ENCODE measurements at regions of chr15 and their contacts with region 1.

Region 1: GRCh38 chr15:84826369-84826823 is 9.2 kb downstream of the ALPK3 start:
- DNase-seq: peak in 1 of 2 experiments; percentile 70
- H3K4me3 ChIP-seq: no peak overlapping the region
- H3K27ac ChIP-seq: no peak overlapping the region
- H3K4me1 ChIP-seq: peaks cover 0 to 10% (median 2%) of the 10 kb centered on the region in 4 experiments; a peak in 2 of 7 replicates
- H3K27me3 ChIP-seq: no peaks in the 10 kb centered on the region
- CTCF ChIP-seq: peak; percentile 74 to 99 (median 90)
- EP300 ChIP-seq: no peak
- POLR2A ChIP-seq: no peak
- RAD21 ChIP-seq: peak; percentile 77 to 82

Region 2: DNA sequence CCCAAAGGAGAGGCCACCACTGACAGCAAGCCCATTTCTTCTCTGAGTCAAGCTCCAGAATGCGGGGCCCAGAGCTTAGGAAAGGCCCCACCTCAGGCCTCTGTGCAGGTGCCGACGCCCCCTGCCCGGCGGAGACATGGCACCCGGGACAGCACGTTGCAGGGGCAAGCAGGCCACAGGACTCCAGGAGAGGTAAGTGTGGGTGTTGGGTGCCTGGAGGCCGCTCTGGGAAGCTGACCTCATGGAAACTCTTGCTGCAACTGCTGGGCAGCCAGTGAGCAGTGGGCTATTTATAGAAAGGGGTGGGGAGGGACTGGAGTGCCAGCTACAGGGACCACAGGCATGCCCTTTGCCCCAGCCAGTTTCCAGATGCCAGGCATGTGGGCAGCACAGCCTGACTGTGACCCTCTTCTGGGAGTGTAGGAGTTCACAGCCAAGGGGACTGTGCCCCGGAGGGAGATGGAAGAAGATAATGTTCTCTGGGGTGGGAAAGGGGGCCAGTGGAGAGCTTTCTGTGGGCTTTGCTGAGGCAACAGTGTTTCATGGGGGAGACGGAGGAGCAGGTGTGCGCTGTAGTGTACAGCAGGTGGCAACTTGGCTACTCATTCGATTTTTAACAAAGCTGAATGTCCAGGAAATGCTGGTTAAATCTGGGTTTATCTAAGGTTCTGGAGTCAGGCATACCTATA is 14.5 kb after region 1 on chr15:
- CTCF ChIA-PET with region 1: interaction called, 89 read pairs
- POLR2A ChIA-PET with region 1: interaction called, 6 read pairs
- DNase-seq: no peak
- H3K4me3 ChIP-seq: no peak overlapping the region
- H3K27ac ChIP-seq: no peak overlapping the region
- H3K4me1 ChIP-seq: no peaks in the 10 kb centered on the region
- H3K27me3 ChIP-seq: no peaks in the 10 kb centered on the region
- CTCF ChIP-seq: no peak
- EP300 ChIP-seq: no peak
- POLR2A ChIP-seq: no peak
- RAD21 ChIP-seq: no peak

Region 3: GRCh38 chr15:84863565-84864443 is 37.4 kb after region 1 on chr15:
- CTCF ChIA-PET with region 1: interaction called, 11 read pairs
- POLR2A ChIA-PET with region 1: interaction called, 3 read pairs
- DNase-seq: no peak
- H3K4me3 ChIP-seq: no peak overlapping the region
- H3K27ac ChIP-seq: no peak overlapping the region
- H3K4me1 ChIP-seq: no peaks in the 10 kb centered on the region
- H3K27me3 ChIP-seq: no peaks in the 10 kb centered on the region
- CTCF ChIP-seq: peak in 2 of 3 experiments; percentile 21 to 25; a peak in 3 of 4 replicates
- EP300 ChIP-seq: no peak
- POLR2A ChIP-seq: no peak
- RAD21 ChIP-seq: peak; percentile 34 to 47; a peak in 3 of 4 replicates

Region 4: GRCh38 chr15:84871428-84872305 is 45.3 kb after region 1 on chr15:
- CTCF ChIA-PET with region 1: interaction called, 18 read pairs
- POLR2A ChIA-PET with region 1: interaction called, 5 read pairs
- DNase-seq: no peak
- H3K4me3 ChIP-seq: no peak overlapping the region
- H3K27ac ChIP-seq: no peak overlapping the region
- H3K4me1 ChIP-seq: no peaks in the 10 kb centered on the region
- H3K27me3 ChIP-seq: no peaks in the 10 kb centered on the region
- CTCF ChIP-seq: peak; percentile 30 to 40 (median 40)
- EP300 ChIP-seq: no peak
- POLR2A ChIP-seq: no peak
- RAD21 ChIP-seq: peak; percentile 34 to 48

Region 5: DNA sequence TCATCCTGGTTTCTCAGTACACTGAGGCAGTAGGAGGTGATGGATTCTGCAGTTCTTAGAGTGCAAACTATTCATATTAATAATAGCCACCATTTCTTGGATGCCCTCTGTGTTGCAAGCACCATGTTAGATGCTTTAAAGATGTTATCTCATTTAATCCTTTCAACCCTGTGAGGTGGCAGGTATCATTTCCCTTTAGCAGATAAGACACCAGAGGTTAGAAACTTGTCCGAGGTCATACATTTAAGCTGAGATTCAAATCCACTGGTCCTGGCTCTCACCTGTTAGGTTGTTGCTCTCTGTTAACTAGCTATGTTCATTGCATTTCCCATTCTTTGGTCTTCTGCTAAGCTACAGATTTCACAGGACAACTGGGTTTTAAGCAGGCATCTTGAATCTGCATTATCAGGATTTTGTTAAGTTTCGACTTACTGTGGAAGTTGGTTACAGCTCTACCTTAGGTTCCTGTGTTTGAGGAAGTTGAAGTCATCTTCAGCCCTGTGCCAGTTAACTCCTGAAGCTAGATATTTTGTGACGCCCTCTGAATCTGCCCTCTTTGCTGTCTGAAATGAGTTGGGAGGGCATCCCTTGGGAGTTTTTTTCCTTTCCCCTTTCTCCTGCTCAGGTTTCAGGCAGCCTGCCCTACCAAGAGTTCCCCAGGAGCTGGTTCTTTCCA is 161.7 kb after region 1 on chr15:
- CTCF ChIA-PET with region 1: no interaction called
- POLR2A ChIA-PET with region 1: no interaction called
- DNase-seq: peak in 1 of 2 experiments; percentile 38
- H3K4me3 ChIP-seq: no peak overlapping the region
- H3K27ac ChIP-seq: no peak overlapping the region
- H3K4me1 ChIP-seq: no peaks in the 10 kb centered on the region
- H3K27me3 ChIP-seq: peaks cover 2 to 9% (median 6%) of the 10 kb centered on the region in 4 experiments
- CTCF ChIP-seq: no peak
- EP300 ChIP-seq: no peak
- POLR2A ChIP-seq: no peak
- RAD21 ChIP-seq: no peak

Measured in H1 (cell line).